OCI-LY7 (cell line): ENCODE measurements at regions of chr12 and their contacts with region 1.

Region 1: DNA sequence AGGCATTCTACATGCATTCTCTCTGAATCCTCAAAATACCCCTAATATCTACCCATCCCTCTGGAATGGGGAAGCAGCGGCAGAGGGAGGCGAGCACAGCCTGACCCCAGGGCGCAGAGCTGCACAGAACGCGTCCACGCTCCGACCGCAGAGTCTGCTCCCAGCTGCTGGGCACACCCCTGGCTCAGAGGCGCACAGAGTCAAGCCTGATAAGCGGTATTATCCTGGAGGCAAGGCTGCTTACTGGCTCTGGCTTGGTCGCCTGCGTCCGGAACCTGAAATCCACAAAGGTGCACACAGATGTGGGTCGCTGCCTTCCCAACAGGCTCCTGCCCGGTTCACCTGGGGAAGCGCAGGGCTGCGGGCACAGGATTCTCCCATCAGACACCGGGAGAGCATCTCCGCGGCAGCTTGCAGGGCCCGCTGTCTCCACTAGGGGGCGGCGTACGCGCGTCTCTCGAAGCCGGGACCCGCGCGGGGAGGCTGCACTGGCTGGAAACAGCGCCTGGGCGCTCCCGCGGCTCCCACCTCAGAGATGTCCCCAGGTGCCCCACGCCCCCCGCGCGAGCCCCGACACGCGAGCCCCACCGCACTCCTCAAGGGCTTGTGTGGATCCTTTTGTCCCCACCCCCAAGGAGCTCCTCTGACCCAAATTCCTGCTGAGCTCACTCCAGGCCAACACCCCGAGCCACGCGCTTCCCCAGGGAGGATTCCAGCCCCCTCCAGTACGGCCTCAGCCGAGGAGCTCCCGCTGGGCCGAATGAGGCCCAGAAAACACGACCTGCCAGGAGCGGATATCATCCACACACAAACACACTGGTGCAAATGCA is 120.1 kb upstream of the FZD10 start:
- DNase-seq: no peak
- H3K4me3 ChIP-seq: no peak overlapping the region
- H3K27ac ChIP-seq: no peak overlapping the region
- H3K4me1 ChIP-seq: no peaks in the 10 kb centered on the region
- CTCF ChIP-seq: peak; percentile 65

Region 2: GRCh38 chr12:130286041-130286440 is 243.8 kb after region 1 on chr12:
- CTCF ChIA-PET with region 1: no interaction called
- POLR2A ChIA-PET with region 1: no interaction called
- intact Hi-C with region 1: no loop called
- DNase-seq: no peak
- H3K4me3 ChIP-seq: no peak overlapping the region
- H3K27ac ChIP-seq: no peak overlapping the region
- H3K4me1 ChIP-seq: no peaks in the 10 kb centered on the region
- CTCF ChIP-seq: peak; percentile 47; the same call in 1 of the 2 replicates

Region 3: DNA sequence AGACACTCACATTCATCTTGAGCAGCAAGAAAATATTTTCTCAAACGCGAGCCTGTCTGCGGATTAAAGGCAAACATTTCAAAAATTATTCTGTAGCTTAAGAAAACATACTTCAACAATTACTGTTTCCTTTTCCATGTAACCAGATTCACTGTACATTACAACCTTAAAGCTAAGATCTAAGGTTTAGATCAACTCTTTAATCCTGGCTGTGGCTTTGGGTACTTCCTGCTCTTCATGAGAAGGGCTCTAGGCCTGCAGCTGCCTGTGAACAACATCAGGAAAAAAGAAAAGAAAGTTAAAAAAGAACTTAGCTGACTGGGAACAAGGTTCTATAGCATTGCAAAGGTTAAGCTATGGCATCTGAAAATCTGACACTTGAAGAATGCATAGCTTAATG is 274.1 kb after region 1 on chr12:
- CTCF ChIA-PET with region 1: no interaction called
- POLR2A ChIA-PET with region 1: no interaction called
- intact Hi-C with region 1: no loop called
- DNase-seq: no peak
- H3K4me3 ChIP-seq: no peak overlapping the region
- H3K27ac ChIP-seq: no peak overlapping the region
- H3K4me1 ChIP-seq: no peaks in the 10 kb centered on the region
- CTCF ChIP-seq: no peak

Region 4: GRCh38 chr12:130335517-130336392 is 293.6 kb after region 1 on chr12:
- CTCF ChIA-PET with region 1: no interaction called
- POLR2A ChIA-PET with region 1: no interaction called
- intact Hi-C with region 1: loop called (anchors 1 kb)
- DNase-seq: peak; percentile 49
- H3K4me3 ChIP-seq: no peak overlapping the region
- H3K27ac ChIP-seq: no peak overlapping the region
- H3K4me1 ChIP-seq: no peaks in the 10 kb centered on the region
- CTCF ChIP-seq: peak; percentile 87

Region 5: GRCh38 chr12:130514149-130514551 is 472.0 kb after region 1 on chr12:
- CTCF ChIA-PET with region 1: no interaction called
- POLR2A ChIA-PET with region 1: no interaction called
- intact Hi-C with region 1: no loop called
- DNase-seq: no peak
- H3K4me3 ChIP-seq: no peak overlapping the region
- H3K27ac ChIP-seq: no peak overlapping the region
- H3K4me1 ChIP-seq: no peaks in the 10 kb centered on the region
- CTCF ChIP-seq: no peak

Region 6: GRCh38 chr12:130747867-130748740 is 705.9 kb after region 1 on chr12:
- CTCF ChIA-PET with region 1: no interaction called
- POLR2A ChIA-PET with region 1: no interaction called
- intact Hi-C with region 1: loop called (anchors 5 kb)
- DNase-seq: peak; percentile 78
- H3K4me3 ChIP-seq: no peak overlapping the region
- H3K27ac ChIP-seq: no peak overlapping the region
- H3K4me1 ChIP-seq: peaks cover 10% of the 10 kb centered on the region
- CTCF ChIP-seq: peak; percentile 90